ENCODE measurements at regions of chr14 and their contacts with region 1.

Region 1: DNA sequence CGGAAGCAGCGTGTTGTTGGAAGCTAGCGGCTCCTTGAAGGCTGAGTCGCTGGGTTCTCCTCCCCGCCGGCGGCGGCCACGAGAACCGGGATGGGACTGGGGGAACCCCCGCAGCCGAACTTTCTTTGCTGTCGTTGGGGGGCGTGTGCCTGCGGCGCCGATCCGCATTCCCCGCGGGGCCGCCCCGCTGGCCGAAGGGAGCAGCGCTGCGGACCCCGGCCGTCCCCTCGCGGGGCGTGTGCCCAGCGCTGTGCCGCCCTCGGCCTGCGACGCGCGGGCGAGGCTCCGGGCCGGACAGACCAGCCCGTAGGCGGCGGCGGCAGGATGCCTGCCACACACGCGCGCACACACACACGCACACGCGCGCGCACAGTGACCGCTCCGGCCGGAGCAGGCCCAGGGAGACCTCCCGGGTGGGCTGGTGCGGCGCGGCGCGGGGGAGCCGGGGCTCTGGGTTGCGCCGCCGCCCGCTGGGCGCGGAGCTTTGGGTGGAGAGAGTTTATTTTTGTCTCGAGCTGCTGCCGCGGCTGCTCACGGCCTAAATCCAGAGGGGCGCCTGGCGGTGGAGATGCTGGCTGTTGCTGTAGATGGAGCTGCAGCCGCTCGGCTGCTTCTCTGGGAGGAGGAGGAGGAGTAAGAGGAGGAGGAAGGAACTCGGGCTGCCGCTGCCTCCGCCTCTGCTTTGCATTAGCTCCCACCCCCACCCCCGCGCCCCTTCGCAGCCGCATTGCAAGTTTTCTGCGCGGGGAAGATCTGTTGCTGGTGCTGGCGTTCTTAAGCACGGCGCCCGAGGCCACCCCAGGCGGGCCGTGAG is at the start of gene SAMD4A:
- DNase-seq: peak; percentile 63
- ATAC-seq: peak; percentile 30
- H3K4me3 Mint-ChIP-seq: peak within 1 kb of the TSS; percentile 99
- H3K27ac Mint-ChIP-seq: peak within 1 kb of the TSS; percentile 96
- H3K4me1 Mint-ChIP-seq: peaks cover 28% of the 10 kb centered on the region
- H3K27me3 Mint-ChIP-seq: peaks cover 4% of the 10 kb centered on the region
- CTCF ChIP-seq: no peak
- total RNA-seq, gene SAMD4A: 6.4 and 8.7 TPM in 2 replicates

Region 2: DNA sequence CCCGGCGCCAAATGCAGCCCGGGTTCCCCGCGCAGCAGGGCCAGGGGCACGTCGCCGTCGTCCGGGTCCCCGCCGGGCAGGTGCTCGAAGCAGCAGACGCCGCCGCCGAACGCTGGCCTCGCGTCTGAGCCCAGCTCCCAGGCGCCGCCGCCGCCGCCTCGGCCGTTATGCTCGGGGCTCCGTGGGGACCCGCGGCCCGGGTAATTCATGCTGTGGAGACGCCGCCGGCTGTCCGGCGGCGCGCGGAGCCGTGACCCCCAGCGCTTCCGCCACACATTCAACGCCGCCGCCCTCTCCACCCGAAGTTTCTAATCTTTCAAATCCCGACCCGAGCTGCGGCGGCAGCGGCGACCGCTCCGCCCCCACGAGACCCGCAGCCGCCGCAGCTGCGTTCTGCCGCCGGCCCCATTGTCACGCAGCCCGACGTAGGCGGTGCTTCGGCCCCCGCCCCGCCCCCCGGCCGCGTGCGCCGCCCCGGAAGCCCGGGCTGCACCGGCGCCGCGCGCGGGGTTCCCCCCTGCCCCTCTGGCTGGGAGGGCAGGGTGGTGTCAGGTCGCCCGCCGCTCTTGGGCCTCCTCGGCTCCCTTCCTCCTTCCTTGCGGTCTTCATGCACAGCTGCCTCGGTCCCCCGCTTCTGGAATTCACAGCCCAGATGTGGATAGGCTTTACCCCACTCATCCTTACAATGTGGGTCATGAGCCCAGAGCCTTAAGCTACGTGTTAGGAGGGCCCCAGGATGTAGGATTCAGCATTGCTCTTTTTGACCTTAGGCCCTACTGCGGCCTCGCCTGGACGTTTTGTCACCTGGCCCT is 1413.5 kb before region 1 on chr14 and contains the start of gene DDHD1:
- CTCF ChIA-PET with region 1: no interaction called
- POLR2A ChIA-PET with region 1: no interaction called
- intact Hi-C with region 1: loop called (anchors 2 kb)
- DNase-seq: peak; percentile 92
- ATAC-seq: peak; percentile 86
- H3K4me3 Mint-ChIP-seq: peak within 1 kb of the TSS; percentile 98
- H3K27ac Mint-ChIP-seq: peak within 1 kb of the TSS; percentile 98
- H3K4me1 Mint-ChIP-seq: peaks cover 48% of the 10 kb centered on the region
- H3K27me3 Mint-ChIP-seq: no peaks in the 10 kb centered on the region
- CTCF ChIP-seq: no peak
- total RNA-seq, gene DDHD1: 44.0 and 59.8 TPM in 2 replicates

Region 3: DNA sequence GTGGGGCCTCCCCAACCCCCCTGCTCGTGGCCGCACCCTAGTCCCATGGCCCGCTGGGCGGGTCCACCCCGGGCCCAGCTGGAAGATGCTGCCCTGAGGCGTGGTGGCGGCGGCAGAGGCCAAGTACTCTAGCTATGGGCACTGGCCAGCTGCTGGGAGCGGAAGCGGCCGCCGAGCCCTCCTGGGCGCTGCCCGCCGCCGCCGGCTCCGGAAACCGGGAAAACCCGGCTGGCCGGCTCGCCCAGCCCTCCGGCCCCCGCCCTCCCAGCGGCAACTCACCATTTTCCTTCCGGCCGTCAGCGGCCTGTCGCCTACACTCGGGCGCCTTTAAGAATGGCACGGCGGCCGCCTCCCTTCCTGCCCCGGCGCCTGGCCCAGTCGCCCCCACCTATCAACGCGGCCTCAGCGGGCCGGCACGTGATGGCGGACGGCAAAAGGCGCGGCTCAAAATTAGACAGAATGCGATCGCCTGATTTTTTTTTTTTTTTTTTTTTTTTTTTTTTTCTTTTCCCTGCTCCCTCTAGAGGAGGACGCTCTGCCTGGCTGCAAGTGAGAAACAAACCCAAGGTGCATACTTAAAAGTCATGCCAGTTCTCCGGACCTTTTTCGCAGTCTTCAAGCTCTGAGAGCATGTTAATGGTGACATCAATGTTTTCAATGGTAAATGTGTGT is 77.8 kb before region 1 on chr14 and contains the start of gene GMFB:
- CTCF ChIA-PET with region 1: no interaction called
- POLR2A ChIA-PET with region 1: interaction called, 7 read pairs
- intact Hi-C with region 1: loop called (anchors 1 kb)
- DNase-seq: peak; percentile 80
- ATAC-seq: peak; percentile 96
- H3K4me3 Mint-ChIP-seq: peak within 1 kb of the TSS; percentile 94
- H3K27ac Mint-ChIP-seq: peak within 1 kb of the TSS; percentile 94
- H3K4me1 Mint-ChIP-seq: peaks cover 66% of the 10 kb centered on the region
- H3K27me3 Mint-ChIP-seq: no peaks in the 10 kb centered on the region
- CTCF ChIP-seq: no peak
- total RNA-seq, gene GMFB: 39.5 and 43.0 TPM in 2 replicates

Region 4: GRCh38 chr14:54691525-54692283 is 125.1 kb after region 1 on chr14:
- CTCF ChIA-PET with region 1: interaction called, 9 read pairs
- POLR2A ChIA-PET with region 1: no interaction called
- intact Hi-C with region 1: loop called (anchors 1 kb)
- DNase-seq: no peak
- ATAC-seq: no peak
- H3K4me3 Mint-ChIP-seq: no peak overlapping the region
- H3K27ac Mint-ChIP-seq: no peak overlapping the region
- H3K4me1 Mint-ChIP-seq: no peaks in the 10 kb centered on the region
- H3K27me3 Mint-ChIP-seq: no peaks in the 10 kb centered on the region
- CTCF ChIP-seq: no peak

Region 5: DNA sequence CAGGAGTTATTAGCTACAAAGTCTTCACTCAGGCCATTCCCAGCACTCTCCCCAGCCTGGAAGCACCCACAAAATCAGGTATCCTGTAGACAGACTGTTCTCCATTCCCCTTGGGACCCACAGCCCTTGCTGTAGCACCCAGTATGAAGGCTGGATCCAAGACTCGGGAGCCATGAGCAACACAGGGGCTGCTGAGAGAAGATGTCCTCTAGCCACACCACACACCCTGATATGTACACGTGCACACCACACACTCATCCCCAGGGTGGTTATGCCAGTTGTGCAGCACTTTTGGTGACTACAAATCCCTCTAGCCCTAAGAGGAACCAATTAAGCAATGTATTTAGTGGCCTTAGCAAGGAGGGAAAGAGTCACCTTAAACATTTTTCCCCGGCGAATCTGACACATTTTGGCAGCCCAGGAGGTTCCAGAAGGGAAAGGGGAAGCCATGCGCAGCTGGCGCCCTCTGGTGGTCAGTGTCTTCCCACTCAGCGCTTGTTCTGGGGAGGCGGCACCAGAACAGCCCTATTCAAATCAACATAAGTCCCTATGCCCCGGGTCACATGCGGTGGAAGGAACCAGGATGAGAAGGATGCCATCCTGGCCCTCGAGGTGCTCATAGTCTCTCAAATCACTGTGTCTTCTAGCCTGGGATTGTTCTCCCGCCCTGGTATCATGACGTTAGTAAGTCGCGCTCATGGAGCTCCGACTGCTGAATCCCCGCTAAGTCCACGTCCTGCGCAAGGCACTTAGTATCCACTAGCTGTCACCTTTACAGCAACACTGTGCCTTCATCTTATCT is 239.1 kb after region 1 on chr14:
- CTCF ChIA-PET with region 1: interaction called, 40 read pairs
- POLR2A ChIA-PET with region 1: no interaction called
- intact Hi-C with region 1: loop called (anchors 1 kb)
- DNase-seq: peak; percentile 62
- ATAC-seq: peak; percentile 88
- H3K4me3 Mint-ChIP-seq: no peak overlapping the region
- H3K27ac Mint-ChIP-seq: no peak overlapping the region
- H3K4me1 Mint-ChIP-seq: peaks cover 6% of the 10 kb centered on the region
- H3K27me3 Mint-ChIP-seq: peaks cover 13% of the 10 kb centered on the region
- CTCF ChIP-seq: peak; percentile 90

Region 6: GRCh38 chr14:54981698-54982097 is 415.1 kb after region 1 on chr14:
- CTCF ChIA-PET with region 1: interaction called, 7 read pairs
- POLR2A ChIA-PET with region 1: no interaction called
- intact Hi-C with region 1: loop called (anchors 1 kb)
- DNase-seq: no peak
- ATAC-seq: no peak
- H3K4me3 Mint-ChIP-seq: no peak overlapping the region
- H3K27ac Mint-ChIP-seq: no peak overlapping the region
- H3K4me1 Mint-ChIP-seq: no peaks in the 10 kb centered on the region
- H3K27me3 Mint-ChIP-seq: no peaks in the 10 kb centered on the region
- CTCF ChIP-seq: no peak

Region 7: GRCh38 chr14:55129428-55130195 is 563.0 kb after region 1 on chr14:
- CTCF ChIA-PET with region 1: no interaction called
- POLR2A ChIA-PET with region 1: no interaction called
- intact Hi-C with region 1: loop called (anchors 1 kb)
- DNase-seq: peak; percentile 83
- ATAC-seq: peak; percentile 83
- H3K4me3 Mint-ChIP-seq: peak overlapping the region; percentile 90
- H3K27ac Mint-ChIP-seq: peak overlapping the region; percentile 88
- H3K4me1 Mint-ChIP-seq: peaks cover 46% of the 10 kb centered on the region
- H3K27me3 Mint-ChIP-seq: peaks cover 2% of the 10 kb centered on the region
- CTCF ChIP-seq: no peak